HCT116 (cell line): ENCODE measurements at regions of chr20 and their contacts with region 1.

Region 1: GRCh38 chr20:47677635-47678453 is 107.4 kb downstream of the SULF2 start:
- DNase-seq: peak; percentile 51
- ATAC-seq: peak; percentile 92
- H3K4me3 ChIP-seq: no peak overlapping the region
- H3K27ac ChIP-seq: no peak overlapping the region
- H3K4me1 ChIP-seq: peaks cover 0 to 8% of the 10 kb centered on the region in 2 experiments; a peak in 1 of 4 replicates
- H3K27me3 ChIP-seq: no peaks in the 10 kb centered on the region
- CTCF ChIP-seq: peak; percentile 59 to 88 (median 87)
- POLR2A ChIP-seq: no peak
- RAD21 ChIP-seq: peak; percentile 87

Region 2: DNA sequence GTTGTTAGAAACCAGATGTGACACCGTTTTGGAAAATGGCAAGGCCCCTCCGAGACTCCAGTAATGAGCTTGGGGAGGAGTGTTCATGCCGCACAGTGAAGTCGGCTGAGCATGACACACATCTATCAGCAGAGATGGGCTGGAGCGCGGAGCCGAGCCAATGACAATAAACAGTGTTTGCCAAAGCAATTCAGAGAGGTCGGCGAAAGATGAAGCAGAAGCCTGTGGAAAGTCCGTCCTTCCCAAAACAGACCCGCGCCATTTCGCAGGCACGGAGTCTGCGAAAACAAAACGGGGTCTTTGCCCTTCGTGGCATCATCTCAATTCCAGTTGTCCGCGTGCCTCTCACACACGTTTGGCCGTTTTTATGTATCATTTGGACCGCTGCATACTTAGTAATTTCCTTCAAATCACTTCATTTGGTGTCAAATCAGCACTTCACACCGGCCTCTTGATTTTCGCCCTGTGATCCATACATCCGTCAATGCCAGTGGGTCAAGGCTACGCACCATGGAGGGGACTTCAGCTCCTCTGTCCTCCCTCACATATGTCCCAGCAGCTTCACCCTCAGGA is 36.1 kb after region 1 on chr20:
- CTCF ChIA-PET with region 1: no interaction called
- POLR2A ChIA-PET with region 1: no interaction called
- RAD21 ChIA-PET with region 1: no interaction called
- intact Hi-C with region 1: loop called (anchors 5 kb)
- DNase-seq: no peak
- ATAC-seq: no peak
- H3K4me3 ChIP-seq: no peak overlapping the region
- H3K27ac ChIP-seq: no peak overlapping the region
- H3K4me1 ChIP-seq: no peaks in the 10 kb centered on the region
- H3K27me3 ChIP-seq: no peaks in the 10 kb centered on the region
- CTCF ChIP-seq: no peak
- POLR2A ChIP-seq: no peak
- RAD21 ChIP-seq: no peak